ENCODE measurements at regions of chr4 and their contacts with region 1.

Region 1: GRCh38 chr4:24584175-24584850 is at the start of gene DHX15:
- DNase-seq: peak; percentile 89 to 96 (median 94)
- H3K4me3 ChIP-seq: peak within 1 kb of the TSS; percentile 65 to 100 (median 97)
- H3K27ac ChIP-seq: peak within 1 kb of the TSS; percentile 73 to 99 (median 96)
- H3K27me3 ChIP-seq: no peaks in the 10 kb centered on the region
- CTCF ChIP-seq: peak in 29 of 56 donors; percentile 2 to 53 (median 28)
- total RNA-seq, gene DHX15: 72.2 to 110 (median 93.0) TPM

Region 2: GRCh38 chr4:24330198-24330972 is 253.9 kb before region 1 on chr4:
- intact Hi-C with region 1: no loop called
- DNase-seq: no peak
- H3K4me3 ChIP-seq: no peak overlapping the region
- H3K27ac ChIP-seq: no peak overlapping the region
- H3K27me3 ChIP-seq: no peaks in the 10 kb centered on the region
- CTCF ChIP-seq: no peak

Region 3: DNA sequence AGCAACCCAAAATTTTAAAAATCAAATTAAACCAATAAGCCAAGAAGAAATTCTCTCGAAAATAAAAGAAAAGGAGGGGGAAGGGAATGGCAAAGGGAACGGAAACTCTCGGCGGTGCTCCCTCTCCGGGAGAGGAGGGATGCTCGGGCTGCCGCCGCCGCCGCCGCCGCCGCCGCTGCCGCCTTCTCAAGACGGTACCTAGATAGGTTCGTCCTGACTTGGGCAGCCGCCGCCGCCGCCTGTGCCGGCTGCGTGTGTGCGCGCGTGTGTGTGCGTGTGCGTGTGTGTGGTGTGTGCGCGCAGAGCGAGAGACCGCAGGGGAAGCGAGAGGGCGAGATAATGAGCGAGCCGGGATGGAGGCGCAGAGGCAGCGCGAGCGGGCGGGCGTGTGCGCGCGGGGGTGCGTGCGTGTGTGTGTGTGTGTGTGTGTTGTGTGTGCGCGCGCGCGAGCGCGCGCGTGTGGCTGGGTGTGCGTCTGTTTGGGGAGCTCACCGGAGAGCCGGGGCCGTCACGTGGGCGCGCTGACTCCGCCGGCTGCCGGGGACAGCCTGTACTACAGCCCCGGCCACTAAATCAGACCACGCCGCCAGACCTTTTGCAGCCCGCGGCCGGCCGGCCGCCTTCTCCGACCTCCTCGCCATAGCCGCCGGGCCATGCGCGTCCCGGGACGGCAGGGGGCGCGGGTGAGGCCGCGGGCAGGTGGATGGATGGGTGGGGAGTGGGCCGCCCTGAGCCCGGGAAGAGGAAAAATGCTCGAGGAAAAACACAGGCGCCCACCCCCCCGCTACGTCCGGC is 111.6 kb before region 1 on chr4:
- intact Hi-C with region 1: loop called (anchors 1 to 2 kb)
- DNase-seq: peak; percentile 70 to 90 (median 83)
- H3K4me3 ChIP-seq: peak overlapping the region; percentile 51 to 86 (median 71)
- H3K27ac ChIP-seq: peak overlapping the region in 58 of 59 donors; percentile 11 to 86 (median 76)
- H3K27me3 ChIP-seq: peaks cover 0 to 7% (median 0%) of the 10 kb centered on the region in 45 donors
- CTCF ChIP-seq: peak in 51 of 56 donors; percentile 9 to 70 (median 49)

Region 4: GRCh38 chr4:24657768-24658617 is 73.7 kb after region 1 on chr4:
- intact Hi-C with region 1: loop called in 1 of 2 experiments (anchors 2 kb)
- DNase-seq: peak; percentile 10 to 92 (median 76)
- H3K4me3 ChIP-seq: peak overlapping the region in 6 of 59 donors; percentile 7 to 40 (median 11)
- H3K27ac ChIP-seq: peak overlapping the region in 58 of 59 donors; percentile 44 to 97 (median 90)
- H3K27me3 ChIP-seq: no peaks in the 10 kb centered on the region
- CTCF ChIP-seq: peak in 2 of 56 donors; percentile 22 to 30

Region 5: GRCh38 chr4:24912252-24913118 is 328.2 kb after region 1 on chr4 and contains the start of gene CCDC149:
- intact Hi-C with region 1: loop called in 1 of 2 experiments (anchors 5 kb)
- DNase-seq: peak in 8 of 10 donors; percentile 32 to 82 (median 51)
- H3K4me3 ChIP-seq: peak within 1 kb of the TSS; percentile 54 to 87 (median 70)
- H3K27ac ChIP-seq: peak within 1 kb of the TSS; percentile 75 to 96 (median 90)
- H3K27me3 ChIP-seq: no peaks in the 10 kb centered on the region
- CTCF ChIP-seq: peak in 9 of 56 donors; percentile 2 to 34 (median 11)
- total RNA-seq, gene CCDC149: 26.6 to 70.3 (median 53.3) TPM

Measured in dorsolateral prefrontal cortex (tissue), 120 donors.